IMR-90 (cell line): ENCODE measurements at regions of chr7 and their contacts with region 1.

Region 1: GRCh38 chr7:150903606-150904005 is 51.3 kb downstream of the AOC1 start:
- DNase-seq: peak; percentile 81
- ATAC-seq: peak; percentile 74
- H3K4me3 ChIP-seq: no peak overlapping the region
- H3K27ac ChIP-seq: peak overlapping the region; percentile 22; the same call in 1 of the 2 replicates
- H3K4me1 ChIP-seq: peaks cover 13% of the 10 kb centered on the region
- H3K27me3 ChIP-seq: no peaks in the 10 kb centered on the region
- CTCF ChIP-seq: no peak
- POLR2A ChIP-seq: no peak
- RAD21 ChIP-seq: no peak

Region 2: GRCh38 chr7:149381245-149381644 is 1522.4 kb before region 1 on chr7:
- CTCF ChIA-PET with region 1: no interaction called
- POLR2A ChIA-PET with region 1: no interaction called
- dilution Hi-C with region 1: no loop called
- in situ Hi-C with region 1: no loop called
- intact Hi-C with region 1: no loop called
- DNase-seq: no peak
- ATAC-seq: no peak
- H3K4me3 ChIP-seq: no peak overlapping the region
- H3K27ac ChIP-seq: no peak overlapping the region
- H3K4me1 ChIP-seq: no peaks in the 10 kb centered on the region
- H3K27me3 ChIP-seq: no peaks in the 10 kb centered on the region
- CTCF ChIP-seq: no peak
- POLR2A ChIP-seq: no peak
- RAD21 ChIP-seq: no peak

Region 3: GRCh38 chr7:151104411-151105235 is 201.0 kb after region 1 on chr7:
- CTCF ChIA-PET with region 1: no interaction called
- POLR2A ChIA-PET with region 1: no interaction called
- dilution Hi-C with region 1: no loop called
- in situ Hi-C with region 1: loop called (anchors 10 kb)
- intact Hi-C with region 1: no loop called
- DNase-seq: peak; percentile 89
- ATAC-seq: peak; percentile 82
- H3K4me3 ChIP-seq: no peak overlapping the region
- H3K27ac ChIP-seq: no peak overlapping the region
- H3K4me1 ChIP-seq: peaks cover 11% of the 10 kb centered on the region
- H3K27me3 ChIP-seq: no peaks in the 10 kb centered on the region
- CTCF ChIP-seq: no peak
- POLR2A ChIP-seq: no peak
- RAD21 ChIP-seq: no peak